Common myeloid progenitor, CD34-positive (primary cell): ENCODE measurements at regions of chr19 and their contacts with region 1.

Region 1: DNA sequence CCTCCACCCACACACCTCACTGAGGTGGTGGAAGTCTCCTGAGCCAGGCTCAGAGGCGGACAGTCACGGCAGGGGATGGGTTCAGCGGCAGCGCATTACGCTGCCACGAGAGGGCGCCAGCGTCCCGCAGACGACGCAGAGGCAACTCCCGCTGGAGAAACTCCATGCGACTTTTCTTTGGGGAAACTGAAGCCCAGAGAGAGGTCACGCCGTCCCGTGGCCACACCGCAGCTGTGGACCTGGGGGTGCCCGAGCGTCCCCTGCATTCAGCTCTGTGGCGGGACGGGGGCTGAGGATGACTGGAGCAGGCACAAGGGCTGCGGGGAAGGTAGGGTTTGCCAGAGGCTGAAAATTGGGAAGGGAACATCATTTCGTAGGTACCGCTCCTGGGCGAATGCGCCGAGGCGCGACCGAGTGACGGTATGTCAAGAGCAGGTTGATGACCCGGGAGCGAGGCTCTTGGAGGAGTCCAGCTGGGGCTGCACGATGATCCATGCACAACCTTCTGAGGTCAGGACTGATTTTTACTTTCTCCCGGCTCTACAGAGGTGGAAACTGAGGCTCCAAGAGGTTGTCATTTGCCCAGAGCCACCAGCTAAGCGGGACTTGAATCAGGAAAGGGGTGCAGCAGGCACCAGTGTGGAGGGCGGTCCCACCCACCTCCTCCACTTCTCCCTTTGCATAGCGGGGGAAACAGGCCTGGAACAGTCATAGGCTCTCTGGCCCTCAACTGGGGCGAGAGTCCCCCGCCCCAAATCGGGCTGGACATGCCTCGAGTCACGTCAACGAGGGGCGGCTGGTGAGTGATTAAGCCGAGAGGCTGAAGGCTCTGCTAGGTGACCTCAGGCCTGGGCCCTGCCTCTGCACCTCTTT is 690 bp upstream of the ARRDC2 start:
- DNase-seq: peak; percentile 70 to 79 (median 74)
- H3K4me3 ChIP-seq: peak overlapping the region; percentile 35 to 85 (median 59)
- H3K27ac ChIP-seq: peak overlapping the region in 1 of 2 experiments; percentile 50
- H3K4me1 ChIP-seq: peaks cover 2 to 44% (median 37%) of the 10 kb centered on the region in 4 experiments
- H3K27me3 ChIP-seq: no peaks in the 10 kb centered on the region

Region 2: GRCh38 chr19:18021121-18021755 is 14.0 kb after region 1 on chr19:
- CTCF ChIA-PET with region 1: interaction called, 24 read pairs
- POLR2A ChIA-PET with region 1: interaction called, 20 read pairs
- DNase-seq: peak; percentile 91 to 96 (median 96)
- H3K4me3 ChIP-seq: peak overlapping the region in 4 of 7 experiments; percentile 30 to 64 (median 47)
- H3K27ac ChIP-seq: peak overlapping the region; percentile 93 to 96
- H3K4me1 ChIP-seq: peaks cover 2 to 72% (median 65%) of the 10 kb centered on the region in 4 experiments
- H3K27me3 ChIP-seq: no peaks in the 10 kb centered on the region

Region 3: GRCh38 chr19:18100710-18101109 is 93.4 kb after region 1 on chr19:
- CTCF ChIA-PET with region 1: no interaction called
- POLR2A ChIA-PET with region 1: no interaction called
- DNase-seq: no peak
- H3K4me3 ChIP-seq: no peak overlapping the region
- H3K27ac ChIP-seq: no peak overlapping the region
- H3K4me1 ChIP-seq: peaks cover 3 to 31% (median 27%) of the 10 kb centered on the region in 4 experiments
- H3K27me3 ChIP-seq: peaks cover 0 to 4% (median 0%) of the 10 kb centered on the region in 5 experiments